ENCODE measurements at regions of chr1 and their contacts with region 1.

Region 1: GRCh38 chr1:58783993-58784757 is at the start of gene JUN:
- DNase-seq: peak; percentile 99
- H3K4me3 ChIP-seq: peak within 1 kb of the TSS; percentile 92
- CTCF ChIP-seq: no peak

Region 2: GRCh38 chr1:58718435-58718834 is 65.7 kb before region 1 on chr1:
- in situ Hi-C with region 1: no loop called
- DNase-seq: no peak
- H3K4me3 ChIP-seq: no peak overlapping the region
- CTCF ChIP-seq: no peak

Region 3: GRCh38 chr1:58732087-58732775 is 51.9 kb before region 1 on chr1:
- in situ Hi-C with region 1: no loop called
- DNase-seq: peak; percentile 47
- H3K4me3 ChIP-seq: no peak overlapping the region
- CTCF ChIP-seq: no peak

Region 4: GRCh38 chr1:58848818-58849411 is 64.7 kb after region 1 on chr1:
- in situ Hi-C with region 1: loop called (anchors 5 kb)
- DNase-seq: peak; percentile 91
- H3K4me3 ChIP-seq: no peak overlapping the region
- CTCF ChIP-seq: peak; percentile 29

Region 5: GRCh38 chr1:59083946-59084865 is 300.0 kb after region 1 on chr1:
- in situ Hi-C with region 1: loop called (anchors 5 kb)
- DNase-seq: no peak
- H3K4me3 ChIP-seq: no peak overlapping the region
- CTCF ChIP-seq: no peak

Region 6: GRCh38 chr1:59150577-59151391 is 366.6 kb after region 1 on chr1:
- in situ Hi-C with region 1: loop called (anchors 10 kb)
- DNase-seq: peak; percentile 92
- H3K4me3 ChIP-seq: peak overlapping the region; percentile 6
- CTCF ChIP-seq: no peak